GM12878 (cell line): ENCODE measurements at regions of chr12 and their contacts with region 1.

Region 1: GRCh38 chr12:16385782-16386646 is 38.6 kb downstream of the MGST1 start:
- DNase-seq: peak; percentile 5
- ATAC-seq: peak; percentile 70
- H3K4me3 ChIP-seq: no peak overlapping the region
- H3K27ac ChIP-seq: no peak overlapping the region
- H3K4me1 ChIP-seq: no peaks in the 10 kb centered on the region
- H3K27me3 ChIP-seq: no peaks in the 10 kb centered on the region
- CTCF ChIP-seq: peak; percentile 15 to 45 (median 21); a peak in 3 of 6 replicates
- EP300 ChIP-seq: no peak
- POLR2A ChIP-seq: no peak
- RAD21 ChIP-seq: peak; percentile 41

Region 2: GRCh38 chr12:16294376-16294956 is 91.5 kb before region 1 on chr12:
- CTCF ChIA-PET with region 1: no interaction called
- POLR2A ChIA-PET with region 1: no interaction called
- RAD21 ChIA-PET with region 1: no interaction called
- SMC1A ChIA-PET with region 1: no interaction called
- in situ Hi-C with region 1: no loop called
- intact Hi-C with region 1: no loop called
- DNase-seq: no peak
- ATAC-seq: no peak
- H3K4me3 ChIP-seq: no peak overlapping the region
- H3K27ac ChIP-seq: no peak overlapping the region
- H3K4me1 ChIP-seq: no peaks in the 10 kb centered on the region
- H3K27me3 ChIP-seq: no peaks in the 10 kb centered on the region
- CTCF ChIP-seq: no peak
- EP300 ChIP-seq: no peak
- POLR2A ChIP-seq: no peak
- RAD21 ChIP-seq: no peak

Region 3: DNA sequence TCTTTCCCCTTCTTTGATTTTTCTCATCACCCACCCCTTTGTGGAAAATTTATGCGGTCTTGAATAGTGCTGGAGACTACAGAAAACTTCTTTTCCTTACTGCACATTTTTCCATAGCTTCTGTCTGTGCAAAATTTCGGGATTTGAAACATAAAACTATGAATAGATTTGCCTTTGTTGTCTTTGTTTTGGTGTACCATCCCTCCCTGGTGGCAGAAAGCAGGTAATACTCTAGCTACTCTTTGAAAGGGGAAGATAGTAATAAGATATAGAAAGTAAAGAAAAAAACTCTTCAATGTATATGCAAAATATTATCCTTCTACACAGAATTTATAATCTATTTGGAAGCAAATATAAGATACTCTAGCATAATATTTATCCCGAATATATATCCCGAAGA is 299.1 kb after region 1 on chr12:
- CTCF ChIA-PET with region 1: interaction called, 7 read pairs
- POLR2A ChIA-PET with region 1: no interaction called
- RAD21 ChIA-PET with region 1: interaction called, 10 read pairs
- SMC1A ChIA-PET with region 1: interaction called, 4 read pairs
- in situ Hi-C with region 1: no loop called
- intact Hi-C with region 1: no loop called
- DNase-seq: no peak
- ATAC-seq: no peak; the same call in 2 of the 3 replicates
- H3K4me3 ChIP-seq: no peak overlapping the region
- H3K27ac ChIP-seq: no peak overlapping the region
- H3K4me1 ChIP-seq: no peaks in the 10 kb centered on the region
- H3K27me3 ChIP-seq: no peaks in the 10 kb centered on the region
- CTCF ChIP-seq: peak in 2 of 3 experiments; percentile 21 to 27; a peak in 2 of 6 replicates
- EP300 ChIP-seq: no peak
- POLR2A ChIP-seq: no peak
- RAD21 ChIP-seq: peak; percentile 58

Region 4: DNA sequence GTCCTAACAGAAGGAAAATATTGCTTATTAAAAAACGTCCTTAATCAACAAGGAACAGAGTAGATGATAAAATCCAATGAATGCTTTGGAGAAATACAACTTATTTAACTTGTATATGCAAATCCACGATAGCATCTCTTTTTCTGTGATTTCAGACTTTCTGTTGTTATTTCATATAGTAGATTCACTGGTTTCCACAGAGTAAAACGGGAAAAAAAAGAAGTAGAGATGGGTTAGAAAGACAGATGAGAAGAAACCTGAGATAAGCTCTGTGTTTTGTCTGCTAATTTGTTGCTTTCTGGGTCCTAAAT is 1256.3 kb after region 1 on chr12:
- CTCF ChIA-PET with region 1: interaction called, 18 read pairs
- POLR2A ChIA-PET with region 1: no interaction called
- RAD21 ChIA-PET with region 1: interaction called, 6 read pairs
- SMC1A ChIA-PET with region 1: interaction called, 5 read pairs
- in situ Hi-C with region 1: no loop called
- intact Hi-C with region 1: no loop called
- DNase-seq: no peak
- ATAC-seq: no peak
- H3K4me3 ChIP-seq: no peak overlapping the region
- H3K27ac ChIP-seq: no peak overlapping the region
- H3K4me1 ChIP-seq: no peaks in the 10 kb centered on the region
- H3K27me3 ChIP-seq: no peaks in the 10 kb centered on the region; a peak in 1 of 4 replicates
- CTCF ChIP-seq: no peak
- EP300 ChIP-seq: no peak
- POLR2A ChIP-seq: no peak
- RAD21 ChIP-seq: no peak